B cell (primary cell): ENCODE measurements at regions of chr20 and their contacts with region 1.

Region 1: DNA sequence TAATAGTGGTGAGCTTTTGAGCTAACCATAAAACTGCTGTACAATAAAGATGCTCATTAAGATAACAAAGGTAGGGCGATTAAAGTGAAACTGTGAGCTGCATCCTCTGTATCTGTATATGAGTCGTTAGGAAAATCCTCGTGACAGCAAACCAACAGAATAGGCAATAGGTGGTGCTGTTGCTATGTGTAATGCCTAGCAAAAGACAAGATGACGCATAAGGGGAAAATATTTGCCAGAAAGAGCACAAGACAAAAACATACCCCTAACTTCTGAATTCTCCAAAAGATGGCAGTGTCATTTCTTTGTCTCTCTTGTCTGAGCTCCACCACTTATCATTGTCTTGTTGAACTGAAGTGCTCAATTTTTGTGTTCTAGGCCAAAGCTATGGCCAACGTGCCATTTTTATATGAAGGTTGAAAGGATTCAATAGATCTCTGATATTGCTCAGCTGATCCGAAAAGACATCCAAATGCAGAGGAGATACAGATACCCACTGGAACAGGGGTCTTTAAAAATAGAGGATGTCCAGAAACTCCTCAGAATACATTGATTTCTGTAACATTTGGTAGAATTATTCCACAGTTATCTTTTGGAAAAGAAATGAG is 56.3 kb upstream of the ANKEF1 start:
- DNase-seq: peak; percentile 73
- ATAC-seq: peak; percentile 70
- H3K4me3 ChIP-seq: no peak overlapping the region
- H3K4me3 Mint-ChIP-seq: no peak overlapping the region
- H3K27ac ChIP-seq: no peak overlapping the region
- H3K27ac Mint-ChIP-seq: no peak overlapping the region
- H3K4me1 ChIP-seq: no peaks in the 10 kb centered on the region
- H3K4me1 Mint-ChIP-seq: no peaks in the 10 kb centered on the region
- H3K27me3 ChIP-seq: peaks cover 0 to 5% (median 0%) of the 10 kb centered on the region in 4 experiments
- H3K27me3 Mint-ChIP-seq: peaks cover 10% of the 10 kb centered on the region
- CTCF ChIP-seq: peak; percentile 82

Region 2: GRCh38 chr20:10034717-10035571 is 56.4 kb after region 1 on chr20 and contains the start of gene ANKEF1:
- CTCF ChIA-PET with region 1: no interaction called
- POLR2A ChIA-PET with region 1: no interaction called
- intact Hi-C with region 1: loop called (anchors 2 kb)
- DNase-seq: peak; percentile 87
- ATAC-seq: peak; percentile 96
- H3K4me3 ChIP-seq: peak within 1 kb of the TSS in 4 of 5 experiments; percentile 58 to 69 (median 62)
- H3K4me3 Mint-ChIP-seq: peak within 1 kb of the TSS; percentile 77
- H3K27ac ChIP-seq: peak within 1 kb of the TSS in 1 of 2 donors; percentile 47
- H3K27ac Mint-ChIP-seq: peak within 1 kb of the TSS; percentile 60
- H3K4me1 ChIP-seq: peaks cover 12 to 16% of the 10 kb centered on the region in 2 donors
- H3K4me1 Mint-ChIP-seq: peaks cover 13% of the 10 kb centered on the region
- H3K27me3 ChIP-seq: no peaks in the 10 kb centered on the region
- H3K27me3 Mint-ChIP-seq: peaks cover 7% of the 10 kb centered on the region
- CTCF ChIP-seq: no peak
- total RNA-seq, gene ANKEF1: 2.7 and 3.0 TPM in 2 replicates

Region 3: DNA sequence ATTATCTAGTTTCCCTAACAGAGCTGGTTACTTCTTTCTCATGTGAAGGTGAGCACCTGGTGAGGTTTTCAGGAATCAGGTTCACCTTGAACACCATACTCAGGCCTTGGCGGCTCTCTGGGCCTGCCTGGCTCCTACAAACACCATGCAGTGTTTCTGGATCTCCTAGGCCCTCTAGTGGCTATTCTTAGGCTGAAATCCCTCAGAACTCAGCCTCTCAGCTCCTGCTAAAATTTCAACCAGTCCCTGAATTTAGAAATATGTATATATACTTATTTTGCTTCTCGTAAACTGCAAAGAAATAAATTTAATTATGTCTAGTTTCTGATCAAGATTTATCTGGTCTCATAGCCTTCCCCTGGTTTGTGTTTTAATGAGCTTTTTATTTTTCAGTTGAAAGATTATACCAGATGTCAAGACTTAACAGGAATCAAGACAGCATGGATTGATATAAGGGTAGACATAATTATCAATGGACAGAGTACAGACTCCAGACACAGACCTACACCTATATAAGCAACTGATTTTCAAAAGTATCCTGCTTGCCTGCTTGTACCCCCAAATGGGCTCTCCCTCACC is 112.2 kb after region 1 on chr20:
- CTCF ChIA-PET with region 1: interaction called, 163 read pairs
- POLR2A ChIA-PET with region 1: no interaction called
- intact Hi-C with region 1: no loop called
- DNase-seq: peak; percentile 54
- ATAC-seq: no peak
- H3K4me3 ChIP-seq: no peak overlapping the region
- H3K4me3 Mint-ChIP-seq: no peak overlapping the region
- H3K27ac ChIP-seq: no peak overlapping the region
- H3K27ac Mint-ChIP-seq: no peak overlapping the region
- H3K4me1 ChIP-seq: no peaks in the 10 kb centered on the region
- H3K4me1 Mint-ChIP-seq: no peaks in the 10 kb centered on the region
- H3K27me3 ChIP-seq: peaks cover 0 to 4% (median 1%) of the 10 kb centered on the region in 4 experiments
- H3K27me3 Mint-ChIP-seq: peaks cover 8% of the 10 kb centered on the region
- CTCF ChIP-seq: peak; percentile 74

Region 4: GRCh38 chr20:10427060-10427692 is 448.7 kb after region 1 on chr20:
- CTCF ChIA-PET with region 1: interaction called, 39 read pairs
- POLR2A ChIA-PET with region 1: no interaction called
- intact Hi-C with region 1: loop called (anchors 1 kb)
- DNase-seq: peak; percentile 62
- ATAC-seq: no peak
- H3K4me3 ChIP-seq: no peak overlapping the region
- H3K4me3 Mint-ChIP-seq: no peak overlapping the region
- H3K27ac ChIP-seq: no peak overlapping the region
- H3K27ac Mint-ChIP-seq: no peak overlapping the region
- H3K4me1 ChIP-seq: no peaks in the 10 kb centered on the region
- H3K4me1 Mint-ChIP-seq: peaks cover 34% of the 10 kb centered on the region
- H3K27me3 ChIP-seq: no peaks in the 10 kb centered on the region
- H3K27me3 Mint-ChIP-seq: no peaks in the 10 kb centered on the region
- CTCF ChIP-seq: peak; percentile 84

Region 5: GRCh38 chr20:10434832-10435812 is 456.6 kb after region 1 on chr20 and contains the start of gene SLX4IP:
- CTCF ChIA-PET with region 1: interaction called, 10 read pairs
- POLR2A ChIA-PET with region 1: no interaction called
- intact Hi-C with region 1: no loop called
- DNase-seq: peak; percentile 94
- ATAC-seq: peak; percentile 67
- H3K4me3 ChIP-seq: peak within 1 kb of the TSS; percentile 72 to 93 (median 73)
- H3K4me3 Mint-ChIP-seq: peak within 1 kb of the TSS; percentile 94
- H3K27ac ChIP-seq: peak within 1 kb of the TSS; percentile 81 to 95
- H3K27ac Mint-ChIP-seq: peak within 1 kb of the TSS; percentile 97
- H3K4me1 ChIP-seq: peaks cover 11 to 12% of the 10 kb centered on the region in 2 donors
- H3K4me1 Mint-ChIP-seq: peaks cover 39% of the 10 kb centered on the region
- H3K27me3 ChIP-seq: no peaks in the 10 kb centered on the region
- H3K27me3 Mint-ChIP-seq: no peaks in the 10 kb centered on the region
- CTCF ChIP-seq: no peak
- total RNA-seq, gene SLX4IP: 8.1 and 9.6 TPM in 2 replicates

Region 6: GRCh38 chr20:11204926-11205768 is 1226.6 kb after region 1 on chr20:
- CTCF ChIA-PET with region 1: no interaction called
- POLR2A ChIA-PET with region 1: no interaction called
- intact Hi-C with region 1: loop called (anchors 10 kb)
- DNase-seq: peak; percentile 14
- ATAC-seq: no peak
- H3K4me3 ChIP-seq: no peak overlapping the region
- H3K4me3 Mint-ChIP-seq: no peak overlapping the region
- H3K27ac ChIP-seq: no peak overlapping the region
- H3K27ac Mint-ChIP-seq: no peak overlapping the region
- H3K4me1 ChIP-seq: no peaks in the 10 kb centered on the region
- H3K4me1 Mint-ChIP-seq: peaks cover 4% of the 10 kb centered on the region
- H3K27me3 ChIP-seq: no peaks in the 10 kb centered on the region
- H3K27me3 Mint-ChIP-seq: no peaks in the 10 kb centered on the region
- CTCF ChIP-seq: peak; percentile 16

Region 7: DNA sequence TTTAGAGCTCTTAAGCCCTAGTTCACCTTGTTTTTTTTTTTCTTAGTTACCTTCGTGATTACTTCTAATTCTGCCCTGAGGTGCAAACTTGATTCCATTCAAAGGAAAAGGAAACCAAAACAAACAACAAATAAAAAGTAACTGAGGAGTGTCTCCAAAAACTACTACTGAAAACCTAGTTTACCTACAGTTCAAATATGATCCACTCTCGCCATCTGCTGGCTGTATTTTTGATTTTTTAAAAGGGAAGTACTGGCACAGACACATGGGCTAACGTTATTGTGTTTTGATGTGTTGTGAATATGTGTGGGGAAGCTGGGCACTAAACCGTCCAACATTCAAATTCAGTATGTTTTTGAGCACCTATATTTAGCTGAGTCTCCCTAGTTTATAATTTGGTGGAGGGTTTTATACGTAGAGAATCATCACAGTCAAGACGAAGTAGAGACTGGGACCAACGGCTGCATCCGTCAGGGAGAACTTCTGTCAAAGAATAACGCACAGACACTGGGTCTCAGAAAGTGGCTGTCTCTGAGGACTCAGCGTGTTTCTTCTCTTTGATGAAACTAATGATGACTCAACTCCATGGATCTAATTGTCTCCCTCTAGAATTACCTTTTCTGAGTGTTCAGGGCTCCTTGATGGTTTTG is 1565.7 kb after region 1 on chr20:
- CTCF ChIA-PET with region 1: no interaction called
- POLR2A ChIA-PET with region 1: no interaction called
- intact Hi-C with region 1: loop called (anchors 5 kb)
- DNase-seq: peak; percentile 11
- ATAC-seq: no peak
- H3K4me3 ChIP-seq: no peak overlapping the region
- H3K4me3 Mint-ChIP-seq: no peak overlapping the region
- H3K27ac ChIP-seq: no peak overlapping the region
- H3K27ac Mint-ChIP-seq: no peak overlapping the region
- H3K4me1 ChIP-seq: no peaks in the 10 kb centered on the region
- H3K4me1 Mint-ChIP-seq: no peaks in the 10 kb centered on the region
- H3K27me3 ChIP-seq: no peaks in the 10 kb centered on the region
- H3K27me3 Mint-ChIP-seq: no peaks in the 10 kb centered on the region
- CTCF ChIP-seq: peak; percentile 14